Transverse colon (tissue), 4 donors: ENCODE measurements at regions of chr2 and their contacts with region 1.

Region 1: DNA sequence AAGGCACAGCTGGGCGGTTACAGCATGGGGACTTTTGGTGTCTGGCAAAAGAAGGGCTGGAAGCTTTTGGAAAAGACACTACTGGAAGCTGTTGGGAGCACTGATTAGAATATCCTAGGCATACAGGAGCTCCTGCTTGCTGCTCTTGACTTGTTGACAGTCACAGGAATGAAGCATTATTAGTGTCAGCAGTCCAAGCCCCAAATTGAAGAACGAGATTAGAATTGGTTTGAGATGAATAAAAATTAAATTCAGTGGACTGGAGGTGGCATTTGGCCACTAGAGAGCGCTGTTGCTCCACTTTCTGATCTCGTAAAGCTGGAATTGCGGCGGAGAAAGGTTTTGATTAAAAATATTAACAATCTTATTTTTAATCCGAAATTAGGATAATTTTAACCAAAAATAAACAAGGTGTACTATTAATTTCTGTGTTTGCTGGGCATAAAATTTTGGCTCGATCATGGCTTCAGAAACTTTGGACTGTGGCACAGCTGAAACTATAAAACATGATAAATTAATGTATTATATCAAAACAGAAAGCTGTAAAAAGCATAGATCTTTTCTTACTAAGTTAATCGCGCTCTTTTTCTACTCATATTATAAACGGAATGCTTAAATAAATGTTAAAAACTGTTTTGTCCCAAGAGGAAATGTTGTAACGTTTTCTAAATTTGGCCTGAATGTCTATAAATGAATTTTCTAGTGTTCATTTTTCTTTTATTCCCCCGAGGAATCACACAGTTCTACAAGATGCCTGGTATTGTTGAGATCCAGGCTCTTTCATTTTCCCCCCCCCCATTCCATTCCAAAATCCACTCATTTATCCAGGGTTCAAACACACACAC is 2.4 kb upstream of the HOXD8 start:
- DNase-seq: peak; percentile 79
- H3K4me3 ChIP-seq: no peak overlapping the region
- H3K27ac ChIP-seq: peak overlapping the region in 2 of 4 donors; percentile 11 to 95
- H3K4me1 ChIP-seq: peaks cover 7 to 55% (median 31%) of the 10 kb centered on the region in 4 donors
- H3K27me3 ChIP-seq: peaks cover 93% of the 10 kb centered on the region
- CTCF ChIP-seq: peak; percentile 86 to 97 (median 94)
- EP300 ChIP-seq: no peak
- POLR2A ChIP-seq: no peak

Region 2: GRCh38 chr2:176454893-176455811 is 328.0 kb after region 1 on chr2:
- in situ Hi-C with region 1: loop called in 2 of 4 experiments (anchors 10 kb)
- intact Hi-C with region 1: no loop called
- DNase-seq: peak; percentile 91
- H3K4me3 ChIP-seq: no peak overlapping the region
- H3K27ac ChIP-seq: peak overlapping the region; percentile 25 to 68 (median 51)
- H3K4me1 ChIP-seq: peaks cover 0 to 7% (median 3%) of the 10 kb centered on the region in 4 donors
- H3K27me3 ChIP-seq: no peaks in the 10 kb centered on the region
- CTCF ChIP-seq: peak; percentile 89 to 96 (median 95)
- EP300 ChIP-seq: no peak
- POLR2A ChIP-seq: no peak

Region 3: DNA sequence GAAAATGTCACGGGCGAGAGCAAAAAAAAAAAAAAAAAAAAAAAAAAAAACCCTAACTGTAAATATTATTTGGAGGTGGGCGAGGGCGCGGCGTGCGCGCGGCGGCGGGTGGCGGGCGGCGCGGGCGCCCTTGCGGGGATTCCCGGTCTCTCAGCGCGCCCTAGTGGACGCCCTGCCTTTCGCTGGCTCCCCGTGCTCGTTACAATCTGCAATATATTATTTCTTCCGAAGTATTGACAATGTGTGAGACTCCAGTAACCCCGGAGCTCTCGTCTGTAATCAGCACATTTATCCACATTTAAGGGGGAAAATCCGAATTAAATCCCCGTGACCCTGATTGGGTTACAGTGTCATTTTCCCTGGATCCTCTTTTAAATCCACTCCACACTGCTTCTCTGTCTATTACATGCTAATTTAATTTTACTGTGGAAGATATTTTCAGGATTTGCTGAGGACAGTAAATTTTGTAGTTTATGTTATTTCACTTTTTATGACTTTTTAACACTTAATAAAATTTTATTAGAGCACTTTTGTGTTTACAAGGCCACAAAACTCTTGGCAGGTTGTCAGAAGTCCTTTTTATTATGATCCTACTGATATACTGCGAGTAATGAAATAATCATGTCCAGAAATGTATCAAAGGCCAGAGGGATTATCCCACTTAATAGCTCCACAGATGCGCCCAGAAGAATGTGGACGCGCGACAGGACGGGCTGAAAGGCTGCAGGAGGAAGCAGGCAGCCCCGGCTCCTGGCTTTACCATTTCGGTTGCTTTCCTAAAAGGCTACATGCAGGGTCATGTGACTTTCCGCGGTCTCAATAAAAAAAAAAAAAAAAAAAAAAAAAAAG is 511.2 kb after region 1 on chr2:
- in situ Hi-C with region 1: loop called in 2 of 4 experiments (anchors 5 to 10 kb)
- intact Hi-C with region 1: loop called (anchors 5 kb)
- DNase-seq: peak; percentile 77
- H3K4me3 ChIP-seq: peak overlapping the region; percentile 69 to 81 (median 78)
- H3K27ac ChIP-seq: peak overlapping the region; percentile 80 to 85 (median 82)
- H3K4me1 ChIP-seq: peaks cover 0 to 9% (median 5%) of the 10 kb centered on the region in 4 donors
- H3K27me3 ChIP-seq: peaks cover 39% of the 10 kb centered on the region
- CTCF ChIP-seq: peak; percentile 35 to 78 (median 69)
- EP300 ChIP-seq: no peak
- POLR2A ChIP-seq: no peak

Region 4: DNA sequence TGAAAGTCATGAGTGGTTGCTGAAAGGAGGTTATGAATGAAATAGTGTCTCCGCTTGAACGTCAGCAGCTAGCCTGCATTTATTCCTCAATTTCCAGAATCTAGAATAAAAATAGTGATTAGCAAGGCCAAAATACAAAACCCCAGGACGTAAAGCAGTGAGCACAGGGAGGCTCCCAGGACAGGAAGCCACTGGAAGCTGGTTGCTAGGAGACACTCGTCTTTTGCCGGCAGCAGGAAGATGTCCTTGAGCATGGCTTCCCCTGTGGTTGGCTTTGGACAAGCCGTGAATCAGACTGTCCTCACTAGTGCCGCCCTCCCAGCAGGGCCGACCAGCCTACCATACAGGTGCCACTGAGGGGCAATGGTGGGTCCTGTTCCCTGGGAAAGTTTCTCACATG is 516.5 kb after region 1 on chr2:
- in situ Hi-C with region 1: loop called in 2 of 4 experiments (anchors 5 to 10 kb)
- intact Hi-C with region 1: loop called (anchors 5 kb)
- DNase-seq: no peak
- H3K4me3 ChIP-seq: no peak overlapping the region
- H3K27ac ChIP-seq: no peak overlapping the region
- H3K4me1 ChIP-seq: peaks cover 0 to 1% (median 0%) of the 10 kb centered on the region in 4 donors
- H3K27me3 ChIP-seq: peaks cover 47% of the 10 kb centered on the region
- CTCF ChIP-seq: no peak
- EP300 ChIP-seq: no peak
- POLR2A ChIP-seq: no peak

Region 5: GRCh38 chr2:177155631-177156030 is 1028.5 kb after region 1 on chr2:
- in situ Hi-C with region 1: loop called in 2 of 4 experiments (anchors 5 to 10 kb)
- intact Hi-C with region 1: no loop called
- DNase-seq: no peak
- H3K4me3 ChIP-seq: no peak overlapping the region
- H3K27ac ChIP-seq: no peak overlapping the region
- H3K4me1 ChIP-seq: no peaks in the 10 kb centered on the region
- H3K27me3 ChIP-seq: no peaks in the 10 kb centered on the region
- CTCF ChIP-seq: no peak
- EP300 ChIP-seq: no peak
- POLR2A ChIP-seq: no peak